Dendritic cell treated with granulocyte-macrophage colony-stimulating factor and Interleukin-4, amounts not matched to agents 40 ng/mL and 50 ng/mL, for 4 days (primary cell): ENCODE measurements at regions of chr10 and their contacts with region 1.

Region 1: DNA sequence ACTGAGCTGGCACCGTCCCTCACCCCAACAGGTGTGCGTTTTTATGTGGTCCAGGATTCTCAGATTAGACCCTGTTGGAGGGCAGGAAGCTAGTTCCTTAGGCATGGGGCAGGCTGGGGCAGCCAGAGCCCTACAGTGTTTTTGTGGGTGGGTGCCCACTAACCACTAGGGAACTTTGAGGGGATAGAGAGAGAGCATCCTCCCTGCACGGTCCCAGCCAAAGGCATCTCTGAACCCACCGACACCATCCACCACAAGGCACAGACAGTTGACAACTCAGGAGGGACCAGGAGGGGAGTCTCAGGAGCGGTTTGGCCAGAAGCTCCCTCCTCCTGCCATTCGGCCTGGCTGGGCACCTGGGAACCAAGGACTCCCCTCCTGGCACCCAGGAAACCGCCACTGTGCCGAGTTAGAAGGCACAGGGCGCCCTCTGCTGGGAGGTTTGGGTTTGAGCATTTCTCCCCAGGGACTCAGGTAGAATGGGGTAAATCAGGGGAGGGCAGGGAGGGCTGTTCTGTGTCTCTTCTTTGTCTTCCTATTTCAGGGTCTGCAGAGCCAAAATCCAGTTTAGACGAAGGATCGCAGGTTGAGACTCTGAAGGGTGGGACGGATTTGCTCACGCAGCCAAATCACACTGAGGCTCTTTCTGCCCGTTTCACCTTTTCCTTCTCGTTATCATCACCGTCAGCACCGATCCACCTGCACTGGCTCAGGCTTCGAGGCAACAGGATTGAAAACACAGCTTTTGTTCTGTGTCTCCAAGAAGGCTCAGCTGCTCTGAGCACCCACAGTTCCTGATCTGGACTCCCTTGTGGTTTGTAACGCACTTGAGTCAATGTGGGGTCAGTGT is 84.8 kb upstream of the COL13A1 start:
- H3K4me3 Mint-ChIP-seq: no peak overlapping the region
- H3K27ac Mint-ChIP-seq: no peak overlapping the region
- H3K4me1 Mint-ChIP-seq: no peaks in the 10 kb centered on the region
- H3K27me3 Mint-ChIP-seq: peaks cover 9% of the 10 kb centered on the region

Region 2: DNA sequence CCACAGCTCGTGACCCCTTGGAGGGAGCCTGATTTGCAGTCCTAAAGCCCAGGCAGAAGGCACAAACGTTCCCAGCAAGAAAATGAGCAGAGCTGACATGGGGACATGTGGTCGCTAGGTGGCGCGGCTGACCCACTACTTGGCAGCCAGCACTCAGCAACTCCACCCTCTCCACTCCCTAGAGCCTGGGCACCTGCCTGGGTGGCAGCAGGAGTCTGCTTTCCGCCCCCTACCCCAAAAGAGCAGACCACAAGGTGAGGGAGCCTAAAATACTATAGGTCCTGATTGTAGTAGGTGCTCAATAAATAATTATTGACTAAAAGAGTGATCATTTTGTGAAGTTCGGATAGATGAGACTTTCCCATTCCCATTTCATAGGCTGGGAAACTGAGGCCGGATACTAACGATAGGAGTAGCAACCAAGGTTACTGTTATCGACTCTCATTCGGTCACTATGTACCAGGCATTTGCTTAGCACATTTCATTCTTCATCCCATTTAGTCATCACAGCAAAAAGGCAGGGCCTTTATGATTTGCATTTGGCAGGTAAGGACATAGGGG is 201.2 kb before region 1 on chr10:
- intact Hi-C with region 1: loop called (anchors 1 kb)
- H3K4me3 Mint-ChIP-seq: no peak overlapping the region
- H3K27ac Mint-ChIP-seq: no peak overlapping the region
- H3K4me1 Mint-ChIP-seq: no peaks in the 10 kb centered on the region
- H3K27me3 Mint-ChIP-seq: peaks cover 30% of the 10 kb centered on the region

Region 3: GRCh38 chr10:69644658-69645295 is 72.2 kb before region 1 on chr10:
- intact Hi-C with region 1: loop called (anchors 2 kb)
- H3K4me3 Mint-ChIP-seq: no peak overlapping the region
- H3K27ac Mint-ChIP-seq: no peak overlapping the region
- H3K4me1 Mint-ChIP-seq: no peaks in the 10 kb centered on the region
- H3K27me3 Mint-ChIP-seq: peaks cover 8% of the 10 kb centered on the region